ENCODE measurements at regions of chr5 and their contacts with region 1.

Region 1: GRCh38 chr5:31232273-31232888 is 38.9 kb downstream of the CDH6 start:
- DNase-seq: no peak
- ATAC-seq: peak; percentile 95
- H3K4me3 ChIP-seq: no peak overlapping the region
- H3K27ac ChIP-seq: no peak overlapping the region
- H3K4me1 ChIP-seq: no peaks in the 10 kb centered on the region
- H3K27me3 ChIP-seq: no peaks in the 10 kb centered on the region
- CTCF ChIP-seq: peak; percentile 62 to 67 (median 66)
- EP300 ChIP-seq: no peak
- POLR2A ChIP-seq: no peak
- RAD21 ChIP-seq: peak; percentile 70

Region 2: DNA sequence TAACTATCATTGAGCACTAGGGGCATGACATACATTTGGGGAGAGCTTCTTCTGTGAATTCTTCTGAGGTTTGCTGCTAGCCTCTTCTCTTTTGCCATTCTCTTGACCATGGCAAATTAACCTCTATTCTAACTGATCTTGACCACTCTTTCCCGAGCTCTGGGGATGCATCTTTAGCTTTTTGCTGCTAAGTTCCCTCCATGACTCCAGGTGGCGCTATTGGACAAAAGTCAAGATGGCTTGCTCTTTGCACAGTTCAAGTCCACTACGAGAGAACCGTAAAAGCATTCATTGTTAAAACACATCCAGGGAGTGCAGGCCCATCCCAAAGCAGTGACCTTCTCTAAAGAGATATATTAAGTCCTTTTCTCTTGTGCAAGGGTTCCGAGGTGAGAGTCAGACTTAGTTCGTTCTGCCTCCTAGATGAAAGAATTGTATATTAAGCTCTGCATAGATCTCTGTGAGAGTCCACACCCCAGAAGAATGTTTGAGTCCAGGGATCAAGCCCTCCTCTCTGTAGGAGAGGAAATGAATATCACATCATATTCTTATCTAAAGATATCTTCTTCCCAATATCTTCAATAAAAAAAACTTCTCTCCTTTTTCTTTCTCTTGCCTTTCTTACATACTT is 1191.8 kb before region 1 on chr5:
- CTCF ChIA-PET with region 1: interaction called, 27 read pairs
- POLR2A ChIA-PET with region 1: no interaction called
- RAD21 ChIA-PET with region 1: interaction called, 15 read pairs
- SMC1A ChIA-PET with region 1: interaction called, 13 read pairs
- in situ Hi-C with region 1: loop called (anchors 25 kb)
- intact Hi-C with region 1: loop called (anchors 2 kb)
- DNase-seq: no peak
- ATAC-seq: peak; percentile 81
- H3K4me3 ChIP-seq: no peak overlapping the region
- H3K27ac ChIP-seq: no peak overlapping the region
- H3K4me1 ChIP-seq: no peaks in the 10 kb centered on the region
- H3K27me3 ChIP-seq: no peaks in the 10 kb centered on the region
- CTCF ChIP-seq: peak; percentile 50 to 69 (median 67); a peak in 5 of 6 replicates
- EP300 ChIP-seq: no peak
- POLR2A ChIP-seq: no peak
- RAD21 ChIP-seq: peak; percentile 67

Region 3: GRCh38 chr5:30401479-30402058 is 830.8 kb before region 1 on chr5:
- CTCF ChIA-PET with region 1: interaction called, 15 read pairs
- POLR2A ChIA-PET with region 1: no interaction called
- RAD21 ChIA-PET with region 1: interaction called, 5 read pairs
- SMC1A ChIA-PET with region 1: no interaction called
- in situ Hi-C with region 1: no loop called
- intact Hi-C with region 1: loop called (anchors 1 kb)
- DNase-seq: no peak
- ATAC-seq: peak; percentile 59
- H3K4me3 ChIP-seq: no peak overlapping the region
- H3K27ac ChIP-seq: no peak overlapping the region
- H3K4me1 ChIP-seq: no peaks in the 10 kb centered on the region
- H3K27me3 ChIP-seq: no peaks in the 10 kb centered on the region
- CTCF ChIP-seq: peak in 2 of 3 experiments; percentile 38 to 41; a peak in 2 of 6 replicates
- EP300 ChIP-seq: no peak
- POLR2A ChIP-seq: no peak
- RAD21 ChIP-seq: 0 out of 2 replicates have a peak, but pooled peaks have one; percentile 16

Region 4: DNA sequence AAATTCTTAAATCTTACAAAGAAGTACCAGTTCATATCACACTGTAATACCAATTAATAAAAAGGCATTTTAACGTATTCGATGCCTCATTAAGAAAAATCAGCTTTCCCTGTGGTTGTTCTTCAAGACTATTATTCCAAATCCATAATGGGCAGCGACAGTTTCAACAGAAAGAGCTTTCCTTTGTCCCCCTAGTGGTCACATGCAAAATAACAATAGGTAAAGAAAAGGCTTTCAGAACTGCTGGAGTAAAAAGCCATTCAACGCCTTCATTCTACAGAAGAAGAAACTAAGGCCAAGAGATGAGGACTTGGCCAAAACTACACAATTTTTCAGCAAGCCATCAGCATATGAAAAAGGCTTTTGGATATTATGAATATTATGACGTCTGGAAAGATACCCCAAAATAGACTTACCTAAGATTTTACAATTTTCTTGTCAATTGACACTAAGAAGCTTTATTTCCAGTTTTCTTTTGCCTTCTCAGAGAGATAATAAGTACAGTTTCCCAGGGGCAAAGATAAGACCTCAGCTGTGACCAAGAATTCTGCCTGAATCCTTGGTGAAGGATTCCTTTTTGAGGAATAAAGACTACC is 45.6 kb before region 1 on chr5:
- CTCF ChIA-PET with region 1: interaction called, 11 read pairs
- POLR2A ChIA-PET with region 1: no interaction called
- RAD21 ChIA-PET with region 1: no interaction called
- SMC1A ChIA-PET with region 1: interaction called, 3 read pairs
- in situ Hi-C with region 1: no loop called
- intact Hi-C with region 1: no loop called
- DNase-seq: no peak
- ATAC-seq: peak; percentile 42; the same call in 1 of the 3 replicates
- H3K4me3 ChIP-seq: no peak overlapping the region
- H3K27ac ChIP-seq: no peak overlapping the region
- H3K4me1 ChIP-seq: no peaks in the 10 kb centered on the region
- H3K27me3 ChIP-seq: no peaks in the 10 kb centered on the region
- CTCF ChIP-seq: peak; percentile 52 to 78 (median 72)
- EP300 ChIP-seq: no peak
- POLR2A ChIP-seq: no peak
- RAD21 ChIP-seq: peak; percentile 43; the same call in 1 of the 2 replicates

Region 5: DNA sequence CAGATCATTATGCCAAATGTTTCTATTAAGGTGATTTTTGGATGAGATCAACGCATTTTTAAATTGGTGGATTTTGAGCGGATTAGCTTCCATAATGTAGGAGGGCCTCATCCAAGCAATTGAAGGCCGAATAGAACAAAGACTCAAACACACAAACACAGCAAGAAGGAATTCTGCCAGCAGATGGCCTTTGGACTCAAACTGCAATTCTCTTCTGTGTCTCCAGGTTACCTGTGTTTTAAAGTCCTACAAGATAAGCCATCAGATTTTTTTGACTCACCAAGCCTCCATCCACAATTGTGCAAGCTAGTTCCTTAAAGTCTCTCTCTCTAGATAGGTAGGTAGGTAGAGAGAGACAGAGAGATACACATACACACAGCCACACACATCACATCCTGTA is 13.4 kb before region 1 on chr5:
- CTCF ChIA-PET with region 1: interaction called, 22 read pairs
- POLR2A ChIA-PET with region 1: no interaction called
- RAD21 ChIA-PET with region 1: no interaction called
- SMC1A ChIA-PET with region 1: interaction called, 3 read pairs
- in situ Hi-C with region 1: no loop called
- intact Hi-C with region 1: no loop called
- DNase-seq: no peak
- ATAC-seq: no peak
- H3K4me3 ChIP-seq: no peak overlapping the region
- H3K27ac ChIP-seq: no peak overlapping the region
- H3K4me1 ChIP-seq: no peaks in the 10 kb centered on the region
- H3K27me3 ChIP-seq: no peaks in the 10 kb centered on the region
- CTCF ChIP-seq: no peak
- EP300 ChIP-seq: no peak
- POLR2A ChIP-seq: no peak
- RAD21 ChIP-seq: no peak

Region 6: DNA sequence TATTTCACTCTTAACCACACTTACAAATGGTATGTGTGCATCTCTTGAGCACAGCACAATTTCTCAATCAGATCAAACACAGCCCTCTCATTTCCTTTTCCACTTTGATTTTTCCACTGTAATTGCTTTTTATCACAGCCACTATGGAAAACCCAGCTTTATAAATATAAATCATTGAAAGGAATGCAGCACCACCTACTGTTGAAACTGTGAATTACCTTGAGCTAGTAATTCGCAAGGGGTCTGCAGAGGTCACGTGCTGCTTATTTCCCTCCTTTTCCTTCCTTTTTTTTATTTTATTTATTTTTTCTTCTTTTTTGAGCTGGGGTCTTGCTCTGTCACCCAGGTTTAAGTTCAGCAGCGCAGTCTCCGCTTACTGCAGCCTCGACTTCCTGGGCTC is 38.0 kb after region 1 on chr5:
- CTCF ChIA-PET with region 1: interaction called, 23 read pairs
- POLR2A ChIA-PET with region 1: no interaction called
- RAD21 ChIA-PET with region 1: interaction called, 4 read pairs
- SMC1A ChIA-PET with region 1: interaction called, 8 read pairs
- in situ Hi-C with region 1: no loop called
- intact Hi-C with region 1: no loop called
- DNase-seq: no peak
- ATAC-seq: no peak
- H3K4me3 ChIP-seq: no peak overlapping the region
- H3K27ac ChIP-seq: no peak overlapping the region
- H3K4me1 ChIP-seq: peaks cover 3% of the 10 kb centered on the region; the same call in 1 of the 2 replicates
- H3K27me3 ChIP-seq: no peaks in the 10 kb centered on the region
- CTCF ChIP-seq: peak; percentile 33 to 42 (median 41); a peak in 4 of 6 replicates
- EP300 ChIP-seq: no peak
- POLR2A ChIP-seq: no peak
- RAD21 ChIP-seq: peak; percentile 37

Region 7: DNA sequence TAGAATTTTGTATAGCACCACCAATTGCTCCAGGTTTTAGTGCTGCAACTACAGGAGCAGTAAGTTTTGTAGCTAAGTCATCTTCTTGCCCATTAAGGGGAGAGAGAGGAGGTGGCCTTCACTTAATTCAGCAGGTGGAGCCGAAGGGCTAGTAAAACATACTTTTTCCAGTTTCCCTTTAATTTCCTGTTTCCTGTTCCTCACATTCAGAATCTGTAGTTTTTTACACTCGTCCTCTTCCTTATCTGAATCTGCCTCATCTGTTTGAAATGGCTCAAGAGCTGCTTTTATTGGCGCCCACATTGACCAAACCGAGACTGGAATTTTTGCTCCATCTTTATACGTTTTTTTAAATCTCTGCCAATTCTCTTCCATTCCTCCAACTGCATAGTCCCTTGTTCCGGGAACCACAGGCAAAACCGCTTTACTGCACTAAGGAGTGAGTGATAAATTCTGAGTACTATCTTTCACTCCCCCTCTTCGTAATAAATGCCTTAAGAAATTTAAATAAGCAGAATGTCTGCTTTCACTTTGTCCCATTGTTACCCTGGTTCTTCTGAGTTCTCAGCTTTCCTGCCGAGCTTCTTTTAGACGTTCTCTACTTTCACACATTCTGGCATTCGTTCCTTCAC is 165.7 kb after region 1 on chr5:
- CTCF ChIA-PET with region 1: no interaction called
- POLR2A ChIA-PET with region 1: no interaction called
- RAD21 ChIA-PET with region 1: no interaction called
- SMC1A ChIA-PET with region 1: no interaction called
- in situ Hi-C with region 1: no loop called
- intact Hi-C with region 1: no loop called
- DNase-seq: no peak
- ATAC-seq: no peak
- H3K4me3 ChIP-seq: no peak overlapping the region
- H3K27ac ChIP-seq: no peak overlapping the region
- H3K4me1 ChIP-seq: no peaks in the 10 kb centered on the region
- H3K27me3 ChIP-seq: no peaks in the 10 kb centered on the region
- CTCF ChIP-seq: no peak
- EP300 ChIP-seq: no peak
- POLR2A ChIP-seq: no peak
- RAD21 ChIP-seq: no peak